ENCODE measurements at regions of chr2 and their contacts with region 1.

Region 1: DNA sequence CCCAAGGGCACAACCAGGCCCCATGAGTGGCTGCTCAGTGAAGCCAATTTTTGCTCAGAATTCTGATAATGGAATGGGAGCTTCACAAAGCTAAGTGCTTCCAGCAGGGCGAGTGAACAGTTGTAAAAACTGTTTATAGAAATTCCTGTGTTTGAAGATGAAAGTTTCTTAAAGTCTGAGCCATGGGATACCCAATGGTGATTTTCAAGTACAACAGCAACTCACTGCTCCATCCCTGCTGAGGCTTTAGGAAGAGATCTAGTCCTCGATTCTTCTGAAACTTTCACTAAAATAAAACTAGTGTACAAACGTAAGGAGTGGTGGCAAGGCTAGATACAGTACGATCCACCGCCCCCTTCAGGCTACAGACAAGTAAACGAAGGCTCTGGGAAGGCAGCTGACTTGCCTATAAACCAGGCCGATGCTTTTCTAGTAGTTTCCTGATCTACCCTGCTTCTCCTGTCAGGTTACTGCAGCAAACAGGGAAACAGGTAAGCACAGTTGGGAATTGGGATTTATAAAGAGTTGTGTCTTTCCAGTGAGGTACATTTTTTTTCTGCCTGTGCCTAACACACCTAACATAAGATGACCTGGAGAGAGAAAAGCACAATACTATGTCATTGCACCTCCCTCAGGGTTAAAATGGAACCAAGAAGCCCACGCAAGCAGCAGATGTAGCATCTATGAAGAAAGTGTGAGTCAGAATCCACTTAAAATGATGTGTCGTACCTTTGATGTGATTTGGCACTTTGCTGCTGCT is 108.7 kb downstream of the UXS1 start:
- DNase-seq: no peak
- ATAC-seq: peak; percentile 78 to 93

Region 2: DNA sequence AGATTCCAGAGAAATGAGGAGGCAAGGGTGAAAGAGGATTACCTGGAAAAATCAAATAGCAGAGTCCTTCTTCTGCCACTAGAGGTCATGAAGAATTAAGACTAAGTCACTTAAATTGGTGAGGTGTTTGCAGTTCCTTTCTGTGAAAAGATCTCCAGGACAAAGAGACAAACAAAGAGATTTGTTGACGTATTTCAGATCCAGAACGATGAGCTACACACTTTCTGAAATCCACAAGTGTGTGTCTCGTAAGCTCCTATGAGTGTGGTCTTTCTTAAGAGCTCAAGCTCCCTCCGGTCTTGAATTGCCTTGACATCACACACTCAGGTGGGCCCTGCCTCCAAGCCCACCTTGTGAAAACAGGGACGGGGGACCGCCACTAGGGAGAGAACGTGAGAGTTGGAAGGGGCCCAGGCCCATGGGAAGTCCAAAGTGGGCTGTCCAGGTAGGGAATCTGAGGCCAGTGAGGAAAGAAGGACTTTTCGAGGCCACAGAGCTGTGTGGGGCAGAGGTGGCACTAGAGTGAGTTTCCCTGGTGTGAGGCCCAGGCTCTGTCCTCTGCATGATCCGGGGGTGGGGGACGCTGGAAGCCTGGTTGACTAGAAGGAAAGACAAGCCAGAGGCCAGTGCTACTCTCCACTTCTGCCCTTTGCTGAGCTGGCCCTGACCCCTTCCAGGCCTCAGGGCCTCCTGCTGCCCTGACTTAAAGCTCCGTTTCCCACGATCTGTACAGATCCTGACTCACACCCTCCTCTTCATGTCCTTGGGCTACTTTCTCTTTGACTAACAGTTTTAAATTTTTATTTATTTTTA is 508.7 kb before region 1 on chr2:
- intact Hi-C with region 1: loop called (anchors 5 to 10 kb)
- DNase-seq: no peak
- ATAC-seq: peak; percentile 63 to 64

Region 3: DNA sequence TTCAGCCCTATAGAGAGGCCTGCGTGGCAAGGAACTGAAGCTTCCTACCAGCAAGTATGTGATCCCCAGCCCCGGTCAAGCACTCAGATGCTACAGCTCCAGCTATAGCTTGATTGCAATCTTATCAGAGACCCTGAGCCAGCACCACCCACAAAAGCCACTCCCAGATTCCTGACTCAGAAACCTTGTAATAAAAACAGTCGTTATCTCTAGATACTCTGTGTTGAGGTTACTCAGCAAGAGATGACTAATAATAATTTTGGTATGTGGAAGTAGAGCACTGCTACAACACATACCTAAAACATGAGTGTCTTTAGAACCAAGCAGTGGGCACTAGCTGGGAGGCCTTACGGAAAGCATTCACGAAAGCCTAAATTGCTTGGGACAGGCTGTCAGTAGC is 108.1 kb before region 1 on chr2:
- intact Hi-C with region 1: no loop called
- DNase-seq: no peak
- ATAC-seq: peak in 1 of 2 donors; percentile 37

Region 4: DNA sequence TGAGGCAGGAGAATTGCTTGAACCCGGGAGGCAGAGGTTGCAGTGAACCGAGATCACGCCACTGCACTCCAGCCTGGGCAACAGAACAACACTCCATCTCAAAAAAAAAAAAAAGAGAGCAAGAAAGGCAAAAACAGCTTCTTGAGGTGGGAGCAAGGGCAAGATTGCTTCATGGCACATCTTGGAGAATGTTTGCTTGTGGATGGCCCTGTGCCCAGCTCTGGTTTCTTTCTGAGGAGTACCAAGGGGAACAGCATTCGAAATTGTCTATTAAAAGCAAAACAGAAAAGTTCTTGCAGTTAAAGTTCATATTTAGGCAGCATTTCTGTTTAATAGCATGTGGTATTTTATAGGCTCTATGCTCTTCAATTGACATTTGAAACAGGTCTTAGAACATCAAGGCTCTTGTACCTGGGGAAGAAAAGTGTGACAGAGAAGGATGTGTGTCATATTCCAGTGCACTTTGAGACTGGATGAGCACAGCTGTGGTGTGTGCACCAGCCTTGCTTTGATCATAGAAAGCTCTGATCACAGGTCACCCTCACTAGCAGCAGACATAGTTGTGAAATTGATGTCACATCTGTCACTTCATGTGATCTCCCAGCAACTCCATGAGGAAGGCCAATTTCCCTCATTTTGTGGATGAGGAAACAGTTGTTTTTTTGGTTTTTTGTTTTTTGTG is 45.6 kb before region 1 on chr2:
- intact Hi-C with region 1: no loop called
- DNase-seq: no peak
- ATAC-seq: no peak

Region 5: DNA sequence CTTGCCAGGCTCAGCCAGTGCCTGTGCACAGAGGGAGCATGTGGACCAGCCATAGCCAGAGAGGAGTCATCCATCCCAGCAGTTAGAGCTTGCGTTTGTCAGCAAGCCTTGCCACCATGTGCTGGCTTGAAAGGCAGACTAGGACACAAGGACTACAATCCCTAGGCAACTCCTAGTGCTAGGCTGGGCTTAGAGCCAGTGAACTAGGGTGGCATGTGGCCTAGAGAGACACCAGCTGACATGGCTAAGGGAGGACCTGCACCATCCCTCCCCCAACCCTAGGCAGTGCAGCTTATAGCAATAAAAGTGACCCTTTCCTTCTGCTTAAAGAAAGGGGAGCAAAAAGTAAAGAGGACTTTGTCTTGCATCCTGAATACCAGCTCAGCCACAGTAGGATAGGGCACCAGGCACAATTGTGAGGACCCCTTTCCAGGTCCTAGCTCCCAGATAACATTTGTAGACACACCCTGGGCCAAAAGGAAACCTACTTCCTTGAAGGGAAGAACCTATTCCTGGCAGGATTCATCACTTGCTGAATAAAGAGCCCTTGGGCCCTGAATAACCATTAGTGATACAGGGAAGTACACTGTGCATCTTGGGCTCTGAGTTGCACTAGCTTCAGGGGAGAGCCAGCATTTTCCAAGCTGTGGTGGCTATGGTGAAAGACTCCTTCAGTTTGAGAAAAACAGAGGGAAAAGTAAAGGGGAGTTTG is 147.4 kb after region 1 on chr2:
- intact Hi-C with region 1: no loop called
- DNase-seq: peak; percentile 49
- ATAC-seq: peak; percentile 84 to 95